Activated B cell treated with CpG ODN at 0.5 μM for 24 hours (primary cell): ENCODE measurements at regions of chr3 and their contacts with region 1.

Region 1: GRCh38 chr3:186783073-186783730 is at the start of gene EIF4A2:
- DNase-seq: peak; percentile 88
- ATAC-seq: peak; percentile 77
- H3K4me3 Mint-ChIP-seq: peak within 1 kb of the TSS; percentile 98
- H3K27ac Mint-ChIP-seq: peak within 1 kb of the TSS; percentile 99
- H3K4me1 Mint-ChIP-seq: peaks cover 48% of the 10 kb centered on the region
- H3K27me3 Mint-ChIP-seq: no peaks in the 10 kb centered on the region
- CTCF ChIP-seq: no peak
- total RNA-seq, gene EIF4A2: 533 and 574 TPM in 2 replicates

Region 2: DNA sequence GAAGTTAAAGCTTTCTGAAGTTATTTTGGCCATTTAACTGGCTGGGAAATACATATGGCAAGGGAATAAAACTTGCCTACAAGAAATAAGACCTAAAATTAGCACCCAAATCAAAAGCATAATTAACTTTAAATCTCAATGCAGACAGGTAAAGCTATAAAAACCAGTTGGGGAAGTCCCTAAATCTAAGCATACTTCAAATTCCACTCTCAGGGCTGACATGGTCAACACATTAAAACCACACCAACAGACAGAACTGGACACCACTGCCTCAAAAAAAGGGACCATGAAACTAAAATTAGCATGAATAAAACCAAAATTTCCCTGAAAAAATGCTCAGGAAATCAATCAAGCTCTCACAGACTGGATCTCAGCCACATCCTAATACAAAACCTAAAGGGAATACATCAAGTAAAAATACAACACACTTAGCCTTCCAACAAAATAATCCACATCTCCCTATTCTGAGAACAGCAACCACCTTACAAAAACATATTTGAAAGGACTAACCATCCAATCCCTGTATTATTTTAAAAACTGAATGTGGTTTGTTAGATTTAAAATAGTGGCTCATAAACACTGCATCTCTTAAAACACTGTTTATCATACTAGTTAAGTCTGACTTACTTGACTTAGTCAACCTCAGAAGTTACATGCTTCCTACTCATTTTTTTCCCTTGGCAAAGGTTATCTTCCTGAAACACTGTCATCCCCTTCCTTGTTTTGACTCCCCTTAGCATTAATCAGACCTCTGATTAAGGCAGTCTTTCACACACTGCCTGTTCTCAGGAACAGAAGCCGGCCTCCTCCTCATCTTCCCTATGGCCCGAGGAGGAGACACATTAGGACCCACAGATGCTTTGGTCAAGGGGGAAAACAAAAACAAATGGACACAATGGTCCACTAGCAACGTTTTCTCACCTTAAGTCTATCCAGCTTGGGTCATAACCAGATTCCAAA is 853.7 kb before region 1 on chr3:
- CTCF ChIA-PET with region 1: no interaction called
- POLR2A ChIA-PET with region 1: interaction called, 12 read pairs
- intact Hi-C with region 1: no loop called
- DNase-seq: no peak
- ATAC-seq: no peak
- H3K4me3 Mint-ChIP-seq: peak overlapping the region; percentile 99
- H3K27ac Mint-ChIP-seq: peak overlapping the region; percentile 81
- H3K4me1 Mint-ChIP-seq: peaks cover 91% of the 10 kb centered on the region
- H3K27me3 Mint-ChIP-seq: no peaks in the 10 kb centered on the region
- CTCF ChIP-seq: no peak

Region 3: GRCh38 chr3:186108941-186109865 is 674.0 kb before region 1 on chr3 and contains the start of gene ETV5:
- CTCF ChIA-PET with region 1: no interaction called
- POLR2A ChIA-PET with region 1: interaction called, 13 read pairs
- intact Hi-C with region 1: loop called (anchors 5 kb)
- DNase-seq: peak; percentile 85
- ATAC-seq: peak; percentile 95
- H3K4me3 Mint-ChIP-seq: peak within 1 kb of the TSS; percentile 95
- H3K27ac Mint-ChIP-seq: peak within 1 kb of the TSS; percentile 80
- H3K4me1 Mint-ChIP-seq: peaks cover 35% of the 10 kb centered on the region
- H3K27me3 Mint-ChIP-seq: peaks cover 42% of the 10 kb centered on the region
- CTCF ChIP-seq: no peak
- total RNA-seq, gene ETV5: 0.49 and 0.89 TPM in 2 replicates

Region 4: DNA sequence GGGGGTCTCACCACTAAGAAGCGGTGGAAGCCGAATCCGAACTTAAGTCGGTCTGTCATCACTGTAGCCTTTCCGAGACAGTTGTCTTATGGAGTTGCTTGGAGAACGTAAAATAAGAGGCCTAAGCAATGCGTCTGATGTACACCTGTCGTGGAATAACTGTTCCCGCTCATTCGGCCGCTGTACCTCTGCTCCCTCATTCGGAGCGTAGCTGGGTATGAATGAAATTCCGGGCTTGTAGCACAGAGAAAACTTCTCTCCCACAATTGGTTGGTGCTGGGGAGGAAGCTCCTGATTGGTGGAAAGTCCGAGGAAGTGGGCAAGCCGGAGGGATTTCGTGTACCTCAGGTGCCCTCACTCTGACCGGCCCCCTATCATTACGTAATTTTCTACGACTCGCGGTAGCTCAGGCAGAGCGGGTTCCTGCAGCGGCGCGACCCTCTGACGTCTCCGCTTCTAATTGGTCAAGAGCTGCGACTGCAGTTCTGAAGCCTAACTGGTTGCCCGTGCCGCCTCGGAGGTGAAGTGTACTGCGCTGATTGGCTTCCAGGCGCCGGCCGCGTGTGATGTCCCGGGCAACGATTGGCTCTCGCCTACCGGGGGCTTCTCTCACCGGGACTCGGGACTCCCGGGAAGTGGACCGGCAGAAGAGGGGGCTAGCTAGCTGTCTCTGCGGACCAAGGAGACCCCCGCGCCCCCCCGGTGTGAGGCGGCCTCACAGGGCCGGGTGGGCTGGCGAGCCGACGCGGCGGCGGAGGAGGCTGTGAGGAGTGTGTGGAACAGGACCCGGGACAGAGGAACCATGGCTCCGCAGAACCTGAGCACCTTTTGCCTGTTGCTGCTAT is 212.9 kb before region 1 on chr3 and contains the start of gene DNAJB11:
- CTCF ChIA-PET with region 1: no interaction called
- POLR2A ChIA-PET with region 1: interaction called, 46 read pairs
- intact Hi-C with region 1: loop called (anchors 1 kb)
- DNase-seq: peak; percentile 91
- ATAC-seq: peak; percentile 82
- H3K4me3 Mint-ChIP-seq: peak within 1 kb of the TSS; percentile 94
- H3K27ac Mint-ChIP-seq: peak within 1 kb of the TSS; percentile 97
- H3K4me1 Mint-ChIP-seq: peaks cover 56% of the 10 kb centered on the region
- H3K27me3 Mint-ChIP-seq: no peaks in the 10 kb centered on the region
- CTCF ChIP-seq: no peak
- total RNA-seq, gene DNAJB11: 51.3 and 52.5 TPM in 2 replicates

Region 5: DNA sequence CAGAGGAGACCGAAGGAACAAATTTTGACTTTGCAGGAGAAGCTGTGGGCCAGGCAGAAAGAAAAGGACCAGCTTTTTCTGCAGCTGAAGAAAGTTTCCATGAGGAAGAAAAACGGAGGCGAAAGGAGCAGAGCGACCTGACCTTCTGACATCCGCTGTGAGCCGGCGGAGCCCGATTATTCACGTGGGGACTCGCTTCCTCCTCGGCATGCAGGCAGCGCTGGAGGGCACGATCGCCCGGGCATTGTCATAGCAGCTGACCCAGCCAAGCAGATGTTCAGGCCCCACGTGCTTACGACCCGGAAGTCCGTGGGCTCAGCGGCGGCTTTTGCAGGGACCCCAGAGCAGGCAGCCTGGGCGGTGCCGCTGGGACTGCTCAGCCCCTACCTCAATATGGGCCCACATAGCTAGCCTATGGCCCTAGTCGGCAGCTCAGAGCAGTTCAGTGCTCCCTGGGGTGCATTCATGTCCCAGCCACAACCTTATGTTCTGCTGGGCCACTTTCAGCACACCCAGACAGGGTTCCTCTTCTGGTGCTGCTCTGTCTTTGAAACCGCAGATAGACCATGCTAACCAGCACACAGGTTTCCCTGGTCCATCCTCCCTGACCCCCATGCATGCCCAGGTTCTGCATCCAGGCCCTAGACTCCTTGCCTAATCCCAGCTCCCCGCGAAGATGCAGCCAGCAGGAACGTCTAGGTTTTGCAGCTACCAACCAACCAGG is 10.3 kb before region 1 on chr3:
- CTCF ChIA-PET with region 1: interaction called, 7 read pairs
- POLR2A ChIA-PET with region 1: interaction called, 258 read pairs
- intact Hi-C with region 1: loop called (anchors 1 kb)
- DNase-seq: peak; percentile 67
- ATAC-seq: peak; percentile 94
- H3K4me3 Mint-ChIP-seq: peak overlapping the region; percentile 96
- H3K27ac Mint-ChIP-seq: peak overlapping the region; percentile 96
- H3K4me1 Mint-ChIP-seq: peaks cover 23% of the 10 kb centered on the region
- H3K27me3 Mint-ChIP-seq: no peaks in the 10 kb centered on the region
- CTCF ChIP-seq: no peak

Region 6: DNA sequence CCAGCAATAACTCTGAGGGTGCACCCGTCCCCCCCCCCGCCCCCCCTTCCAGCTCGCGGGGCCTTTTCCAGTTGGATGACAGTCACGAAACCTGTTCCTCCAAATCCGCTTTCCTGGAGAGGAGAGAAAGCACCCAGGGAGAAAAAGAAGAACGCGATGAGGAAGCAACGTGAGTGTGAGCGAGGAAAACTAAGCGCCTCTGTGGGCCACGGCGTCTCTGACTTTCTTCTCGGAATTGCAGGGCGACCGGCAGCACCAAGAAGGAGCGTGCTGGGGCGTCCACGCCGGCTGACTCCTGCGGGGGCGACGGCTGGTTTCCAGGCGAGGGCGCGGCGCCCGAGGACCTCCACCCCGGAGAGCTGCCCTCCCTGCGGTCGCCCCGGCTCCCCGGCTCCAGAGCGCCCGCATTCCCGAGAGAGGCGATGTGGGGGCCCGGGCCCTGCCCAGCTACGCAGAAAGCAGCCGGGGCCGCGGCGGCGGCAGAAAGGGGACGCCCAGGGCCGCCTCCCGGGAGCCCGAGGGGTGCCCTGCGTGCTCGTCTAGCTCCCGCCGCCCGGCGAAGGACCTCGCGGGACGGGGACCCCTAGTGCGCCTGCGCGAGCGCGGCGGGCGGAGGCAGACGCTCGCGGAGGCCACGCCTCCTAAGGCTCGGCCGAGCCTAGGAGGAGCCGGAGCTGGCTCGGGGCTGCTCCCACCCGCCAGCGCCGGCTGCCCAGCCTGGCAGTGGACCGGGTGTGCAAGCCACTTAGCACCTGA is 44.0 kb after region 1 on chr3:
- CTCF ChIA-PET with region 1: interaction called, 5 read pairs
- POLR2A ChIA-PET with region 1: interaction called, 55 read pairs
- intact Hi-C with region 1: loop called (anchors 2 kb)
- DNase-seq: peak; percentile 85
- ATAC-seq: peak; percentile 94
- H3K4me3 Mint-ChIP-seq: peak overlapping the region; percentile 71
- H3K27ac Mint-ChIP-seq: no peak overlapping the region
- H3K4me1 Mint-ChIP-seq: peaks cover 22% of the 10 kb centered on the region
- H3K27me3 Mint-ChIP-seq: peaks cover 47% of the 10 kb centered on the region
- CTCF ChIP-seq: no peak

Region 7: DNA sequence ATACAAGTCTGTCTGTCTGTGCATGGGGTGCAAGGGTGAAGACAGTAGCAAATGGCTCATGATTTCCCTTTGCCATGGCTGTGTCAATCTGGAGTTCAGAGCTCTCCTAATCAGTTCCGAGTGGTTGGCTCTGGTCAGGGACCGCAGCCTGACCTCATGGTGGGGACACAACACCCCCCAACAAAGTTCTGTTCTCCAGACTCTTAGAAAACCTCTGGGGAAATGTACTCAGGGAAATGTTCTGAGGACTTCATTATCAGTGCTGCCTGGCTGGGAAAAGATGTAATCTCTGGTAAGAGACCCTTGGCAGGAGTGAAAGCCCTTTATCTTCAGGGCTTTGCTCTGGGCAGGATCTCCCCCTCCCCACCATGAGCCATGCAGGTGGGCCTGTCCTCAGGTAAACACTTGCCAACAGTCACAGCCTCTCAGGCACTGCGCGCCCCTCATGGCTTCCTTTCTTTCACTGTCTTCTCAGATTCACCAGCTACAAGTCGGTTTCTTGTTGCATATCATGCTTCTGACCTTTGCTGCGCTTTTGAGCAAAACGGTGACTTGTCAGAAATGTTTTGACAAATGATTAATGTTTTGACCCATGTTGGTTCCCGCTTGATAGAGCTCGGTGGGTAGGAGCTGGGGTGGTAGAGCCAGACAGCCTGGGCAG is 242.6 kb after region 1 on chr3:
- CTCF ChIA-PET with region 1: no interaction called
- POLR2A ChIA-PET with region 1: interaction called, 11 read pairs
- intact Hi-C with region 1: no loop called
- DNase-seq: no peak
- ATAC-seq: peak; percentile 51
- H3K4me3 Mint-ChIP-seq: peak overlapping the region; percentile 84
- H3K27ac Mint-ChIP-seq: peak overlapping the region; percentile 93
- H3K4me1 Mint-ChIP-seq: peaks cover 93% of the 10 kb centered on the region
- H3K27me3 Mint-ChIP-seq: no peaks in the 10 kb centered on the region
- CTCF ChIP-seq: no peak